CD8-positive, alpha-beta memory T cell (primary cell): ENCODE measurements at regions of chr5 and their contacts with region 1.

Region 1: DNA sequence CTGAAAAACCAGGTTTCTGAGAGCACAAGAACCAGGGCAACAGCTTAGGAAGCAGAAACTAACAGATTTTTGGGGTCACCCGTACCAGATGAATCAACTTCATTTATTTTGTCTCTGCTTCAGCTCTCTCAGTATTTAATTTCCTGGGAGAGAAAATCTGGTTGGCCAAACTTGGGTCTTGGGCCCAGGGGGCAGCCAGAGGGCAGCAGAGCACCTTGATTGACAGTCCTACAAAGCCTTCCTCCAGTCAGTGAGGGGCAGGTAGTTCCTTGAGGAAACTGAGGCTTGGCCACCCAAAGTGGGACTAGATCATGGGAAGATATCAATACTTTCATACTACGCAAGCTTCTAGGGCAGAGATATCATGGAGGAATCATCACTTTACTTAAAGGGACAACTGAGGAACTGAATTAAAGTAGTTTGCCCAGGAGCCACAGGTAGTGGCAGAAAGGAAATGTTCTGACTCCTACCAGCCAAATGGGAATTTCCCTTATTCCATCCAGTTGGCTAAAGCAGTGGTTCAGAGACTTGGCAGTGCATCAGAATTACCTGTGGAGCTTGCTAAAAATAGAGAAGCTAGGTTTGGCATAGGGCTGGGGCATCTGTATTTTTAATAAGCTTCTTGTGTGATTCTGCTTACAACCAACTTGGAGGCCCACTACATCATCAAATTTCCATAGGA is 21.5 kb upstream of the ARHGAP26 start:
- DNase-seq: peak; percentile 31 to 70 (median 39)
- H3K4me3 ChIP-seq: no peak overlapping the region
- H3K4me3 Mint-ChIP-seq: no peak overlapping the region
- H3K27ac ChIP-seq: no peak overlapping the region
- H3K27ac Mint-ChIP-seq: peak overlapping the region in 3 of 8 donors; percentile 10 to 51 (median 47)
- H3K4me1 ChIP-seq: no peaks in the 10 kb centered on the region
- H3K4me1 Mint-ChIP-seq: peaks cover 12 to 16% (median 13%) of the 10 kb centered on the region in 3 donors
- H3K27me3 ChIP-seq: no peaks in the 10 kb centered on the region
- H3K27me3 Mint-ChIP-seq: peaks cover 2 to 3% of the 10 kb centered on the region in 2 donors

Region 2: GRCh38 chr5:142659405-142659804 is 89.3 kb before region 1 on chr5:
- CTCF ChIA-PET with region 1: no interaction called
- POLR2A ChIA-PET with region 1: no interaction called
- DNase-seq: no peak
- H3K4me3 ChIP-seq: no peak overlapping the region
- H3K4me3 Mint-ChIP-seq: no peak overlapping the region
- H3K27ac ChIP-seq: no peak overlapping the region
- H3K27ac Mint-ChIP-seq: no peak overlapping the region
- H3K4me1 ChIP-seq: peaks cover 5% of the 10 kb centered on the region
- H3K4me1 Mint-ChIP-seq: peaks cover 3 to 6% (median 6%) of the 10 kb centered on the region in 3 donors
- H3K27me3 ChIP-seq: peaks cover 7% of the 10 kb centered on the region
- H3K27me3 Mint-ChIP-seq: peaks cover 11 to 51% of the 10 kb centered on the region in 2 donors

Region 3: DNA sequence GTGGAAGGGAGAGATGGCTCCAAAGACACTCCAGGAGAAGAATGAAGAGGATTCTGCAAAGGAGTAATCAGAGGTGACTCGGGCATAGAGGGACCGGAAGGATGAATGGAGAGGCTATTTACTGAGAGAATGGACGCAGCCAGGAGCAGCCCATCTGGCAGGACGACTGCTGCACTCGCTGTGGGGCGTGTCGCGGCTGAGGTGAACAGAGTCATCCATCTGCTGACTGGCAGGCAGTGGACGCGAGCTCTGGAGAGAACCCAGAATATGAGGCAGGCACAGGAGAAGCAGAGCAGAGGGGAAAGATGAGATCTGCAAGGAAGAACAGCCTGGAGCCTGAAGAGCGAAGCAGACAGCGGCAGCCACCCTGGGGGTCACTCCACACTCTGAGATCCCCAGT is 79.2 kb before region 1 on chr5:
- CTCF ChIA-PET with region 1: no interaction called
- POLR2A ChIA-PET with region 1: no interaction called
- DNase-seq: no peak
- H3K4me3 ChIP-seq: no peak overlapping the region
- H3K4me3 Mint-ChIP-seq: no peak overlapping the region
- H3K27ac ChIP-seq: no peak overlapping the region
- H3K27ac Mint-ChIP-seq: no peak overlapping the region
- H3K4me1 ChIP-seq: no peaks in the 10 kb centered on the region
- H3K4me1 Mint-ChIP-seq: no peaks in the 10 kb centered on the region
- H3K27me3 ChIP-seq: peaks cover 4% of the 10 kb centered on the region
- H3K27me3 Mint-ChIP-seq: peaks cover 2 to 3% of the 10 kb centered on the region in 2 donors

Region 4: GRCh38 chr5:142769741-142770631 is 21.3 kb after region 1 on chr5 and contains the start of gene ARHGAP26:
- CTCF ChIA-PET with region 1: interaction called, 37 read pairs
- POLR2A ChIA-PET with region 1: interaction called, 6 read pairs
- DNase-seq: peak; percentile 90 to 95 (median 92)
- H3K4me3 ChIP-seq: peak within 1 kb of the TSS; percentile 89
- H3K4me3 Mint-ChIP-seq: peak within 1 kb of the TSS; percentile 93 to 98 (median 96)
- H3K27ac ChIP-seq: peak within 1 kb of the TSS; percentile 75
- H3K27ac Mint-ChIP-seq: peak within 1 kb of the TSS; percentile 83 to 98 (median 96)
- H3K4me1 ChIP-seq: peaks cover 33% of the 10 kb centered on the region
- H3K4me1 Mint-ChIP-seq: peaks cover 39 to 46% (median 44%) of the 10 kb centered on the region in 3 donors
- H3K27me3 ChIP-seq: no peaks in the 10 kb centered on the region
- H3K27me3 Mint-ChIP-seq: no peaks in the 10 kb centered on the region
- total RNA-seq, gene ARHGAP26: 16.7 to 19.7 TPM

Region 5: DNA sequence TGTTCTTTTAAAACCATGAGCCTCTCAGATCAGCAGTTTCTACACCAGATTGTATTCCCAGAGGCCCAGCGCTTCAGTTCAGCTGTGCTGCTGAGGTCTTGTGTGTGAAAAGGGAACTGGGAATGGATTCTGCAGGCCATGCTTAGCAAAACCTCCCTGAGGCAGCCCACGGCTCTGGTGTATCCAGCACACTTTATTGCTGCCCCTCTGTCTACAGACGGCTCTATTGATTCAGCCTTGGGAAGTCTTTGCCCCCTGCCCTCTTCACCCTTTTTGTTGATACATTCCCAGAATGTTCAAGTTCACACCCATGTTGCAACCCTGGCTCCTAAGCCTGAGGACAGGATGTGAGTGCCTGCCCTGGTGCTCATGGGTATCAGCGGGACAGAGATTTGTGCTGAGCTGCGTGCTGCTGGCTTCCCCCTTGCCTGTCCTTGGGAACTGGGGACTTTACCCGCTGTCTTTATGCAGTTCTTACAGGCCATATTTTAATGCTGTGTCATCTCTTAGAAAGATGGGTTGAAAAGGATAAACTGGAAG is 58.7 kb after region 1 on chr5:
- CTCF ChIA-PET with region 1: interaction called, 3 read pairs
- POLR2A ChIA-PET with region 1: interaction called, 10 read pairs
- DNase-seq: no peak
- H3K4me3 ChIP-seq: no peak overlapping the region
- H3K4me3 Mint-ChIP-seq: no peak overlapping the region
- H3K27ac ChIP-seq: no peak overlapping the region
- H3K27ac Mint-ChIP-seq: peak overlapping the region in 3 of 8 donors; percentile 3 to 63 (median 26)
- H3K4me1 ChIP-seq: peaks cover 12% of the 10 kb centered on the region
- H3K4me1 Mint-ChIP-seq: peaks cover 55 to 84% (median 63%) of the 10 kb centered on the region in 3 donors
- H3K27me3 ChIP-seq: no peaks in the 10 kb centered on the region
- H3K27me3 Mint-ChIP-seq: no peaks in the 10 kb centered on the region

Region 6: DNA sequence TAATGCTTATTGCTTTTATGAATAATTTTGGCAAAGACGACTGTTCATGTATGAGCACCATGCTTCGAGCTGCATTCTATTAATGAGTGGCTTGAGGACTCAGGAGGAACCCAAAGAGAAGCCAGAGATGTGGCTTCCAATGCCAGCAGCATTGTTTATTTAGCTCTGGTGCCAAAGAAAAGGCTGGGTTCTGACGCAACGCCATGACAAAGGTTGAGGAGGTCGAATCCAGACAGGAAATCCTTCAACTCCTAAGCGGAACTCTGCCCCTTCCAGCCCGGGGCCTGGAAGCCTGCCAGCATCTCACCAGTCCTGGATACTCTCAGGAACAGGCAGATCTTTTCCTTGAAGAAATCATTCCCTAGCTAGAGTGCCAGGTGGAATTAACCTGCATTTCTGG is 125.8 kb after region 1 on chr5:
- CTCF ChIA-PET with region 1: interaction called, 88 read pairs
- POLR2A ChIA-PET with region 1: interaction called, 7 read pairs
- DNase-seq: no peak
- H3K4me3 ChIP-seq: no peak overlapping the region
- H3K4me3 Mint-ChIP-seq: no peak overlapping the region
- H3K27ac ChIP-seq: no peak overlapping the region
- H3K27ac Mint-ChIP-seq: peak overlapping the region in 1 of 8 donors; percentile 4
- H3K4me1 ChIP-seq: no peaks in the 10 kb centered on the region
- H3K4me1 Mint-ChIP-seq: peaks cover 30 to 35% (median 30%) of the 10 kb centered on the region in 3 donors
- H3K27me3 ChIP-seq: no peaks in the 10 kb centered on the region
- H3K27me3 Mint-ChIP-seq: no peaks in the 10 kb centered on the region

Region 7: GRCh38 chr5:142888469-142889085 is 139.9 kb after region 1 on chr5:
- CTCF ChIA-PET with region 1: interaction called, 88 read pairs
- POLR2A ChIA-PET with region 1: no interaction called
- DNase-seq: peak in 2 of 5 donors; percentile 9 to 21
- H3K4me3 ChIP-seq: no peak overlapping the region
- H3K4me3 Mint-ChIP-seq: no peak overlapping the region
- H3K27ac ChIP-seq: no peak overlapping the region
- H3K27ac Mint-ChIP-seq: peak overlapping the region in 2 of 8 donors; percentile 16 to 64
- H3K4me1 ChIP-seq: no peaks in the 10 kb centered on the region
- H3K4me1 Mint-ChIP-seq: peaks cover 39 to 47% (median 43%) of the 10 kb centered on the region in 3 donors
- H3K27me3 ChIP-seq: no peaks in the 10 kb centered on the region
- H3K27me3 Mint-ChIP-seq: no peaks in the 10 kb centered on the region

Region 8: DNA sequence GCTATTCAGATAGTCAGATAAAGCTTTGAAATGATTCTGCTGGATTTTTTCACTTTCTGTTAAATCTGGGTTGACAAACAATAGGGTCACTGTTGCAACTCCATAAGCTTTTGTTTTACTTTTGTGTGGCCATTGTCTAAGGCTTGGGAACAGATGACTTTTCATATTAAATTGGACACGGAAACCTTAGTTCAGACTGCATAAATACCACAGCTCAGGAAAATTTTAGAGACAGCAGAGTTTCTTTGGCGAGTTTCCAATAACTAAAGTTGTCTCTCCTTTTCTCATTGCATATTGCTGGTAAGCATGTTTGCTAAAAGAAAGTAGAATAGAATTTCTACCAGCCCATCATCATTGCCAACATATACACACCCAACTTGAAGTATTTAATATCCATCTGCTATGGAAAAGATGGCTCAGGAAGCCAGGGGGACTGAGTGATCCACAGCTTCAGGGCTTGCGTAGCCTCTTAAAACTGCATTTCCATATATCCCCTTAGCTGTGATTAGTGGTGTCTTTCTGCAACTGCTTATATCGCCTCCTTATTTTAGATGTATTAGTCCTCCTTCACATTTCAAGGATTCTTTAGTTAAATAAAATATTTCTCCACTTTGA is 189.7 kb after region 1 on chr5:
- CTCF ChIA-PET with region 1: no interaction called
- POLR2A ChIA-PET with region 1: no interaction called
- DNase-seq: no peak
- H3K4me3 ChIP-seq: no peak overlapping the region
- H3K4me3 Mint-ChIP-seq: no peak overlapping the region
- H3K27ac ChIP-seq: no peak overlapping the region
- H3K27ac Mint-ChIP-seq: no peak overlapping the region
- H3K4me1 ChIP-seq: peaks cover 3% of the 10 kb centered on the region
- H3K4me1 Mint-ChIP-seq: peaks cover 61 to 63% (median 62%) of the 10 kb centered on the region in 3 donors
- H3K27me3 ChIP-seq: no peaks in the 10 kb centered on the region
- H3K27me3 Mint-ChIP-seq: peaks cover 0 to 3% of the 10 kb centered on the region in 2 donors

Region 9: DNA sequence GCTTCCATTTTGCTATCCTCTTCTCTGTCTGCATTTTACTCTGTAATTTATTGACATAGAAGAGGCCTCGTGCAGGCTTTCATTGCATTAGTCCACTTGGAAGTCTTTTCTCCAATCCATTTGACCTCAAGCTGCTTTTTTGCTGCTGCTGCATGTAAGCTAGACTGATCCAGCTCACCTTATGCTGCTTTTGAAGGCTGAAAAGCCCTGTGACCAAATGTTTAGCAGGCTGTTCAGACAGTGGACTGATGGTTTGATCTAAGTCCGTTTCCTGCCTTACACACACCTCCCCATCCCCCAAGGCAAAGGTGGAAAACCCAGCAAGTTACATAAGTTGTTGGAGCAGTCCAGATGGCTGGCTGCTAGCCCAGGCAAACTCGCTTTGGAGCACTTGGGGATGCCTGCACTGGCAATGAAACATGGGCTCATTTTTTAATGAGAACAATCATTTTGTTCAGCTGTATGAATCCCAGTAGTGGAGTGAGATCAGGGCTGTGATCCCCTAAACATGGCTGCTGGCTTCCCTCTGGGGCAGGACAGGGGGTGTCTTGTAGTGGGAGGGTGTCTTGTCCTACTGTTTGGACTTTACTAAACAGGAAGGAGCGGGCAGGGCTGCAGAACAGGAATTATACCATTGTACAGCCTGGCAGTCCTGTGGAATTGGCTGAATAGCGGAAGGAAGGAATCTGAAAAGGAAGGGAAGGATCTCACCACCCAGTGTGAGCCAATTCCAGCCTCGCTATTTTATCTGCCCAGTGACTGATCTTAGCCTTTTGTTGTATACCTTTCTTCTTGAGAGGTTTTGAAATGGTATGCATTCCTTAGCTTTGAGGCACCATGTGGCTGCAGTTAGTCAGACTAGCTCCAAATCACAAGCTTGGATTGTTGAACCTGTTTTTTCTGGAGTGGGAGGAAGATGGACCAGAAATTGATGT is 233.4 kb after region 1 on chr5:
- CTCF ChIA-PET with region 1: no interaction called
- POLR2A ChIA-PET with region 1: no interaction called
- DNase-seq: no peak
- H3K4me3 ChIP-seq: no peak overlapping the region
- H3K4me3 Mint-ChIP-seq: peak overlapping the region; percentile 6 to 78 (median 42)
- H3K27ac ChIP-seq: no peak overlapping the region
- H3K27ac Mint-ChIP-seq: peak overlapping the region; percentile 83 to 99 (median 94)
- H3K4me1 ChIP-seq: peaks cover 56% of the 10 kb centered on the region
- H3K4me1 Mint-ChIP-seq: peaks cover 74 to 81% (median 80%) of the 10 kb centered on the region in 3 donors
- H3K27me3 ChIP-seq: no peaks in the 10 kb centered on the region
- H3K27me3 Mint-ChIP-seq: no peaks in the 10 kb centered on the region